ENCODE measurements at regions of chr19 and their contacts with region 1.

Region 1: DNA sequence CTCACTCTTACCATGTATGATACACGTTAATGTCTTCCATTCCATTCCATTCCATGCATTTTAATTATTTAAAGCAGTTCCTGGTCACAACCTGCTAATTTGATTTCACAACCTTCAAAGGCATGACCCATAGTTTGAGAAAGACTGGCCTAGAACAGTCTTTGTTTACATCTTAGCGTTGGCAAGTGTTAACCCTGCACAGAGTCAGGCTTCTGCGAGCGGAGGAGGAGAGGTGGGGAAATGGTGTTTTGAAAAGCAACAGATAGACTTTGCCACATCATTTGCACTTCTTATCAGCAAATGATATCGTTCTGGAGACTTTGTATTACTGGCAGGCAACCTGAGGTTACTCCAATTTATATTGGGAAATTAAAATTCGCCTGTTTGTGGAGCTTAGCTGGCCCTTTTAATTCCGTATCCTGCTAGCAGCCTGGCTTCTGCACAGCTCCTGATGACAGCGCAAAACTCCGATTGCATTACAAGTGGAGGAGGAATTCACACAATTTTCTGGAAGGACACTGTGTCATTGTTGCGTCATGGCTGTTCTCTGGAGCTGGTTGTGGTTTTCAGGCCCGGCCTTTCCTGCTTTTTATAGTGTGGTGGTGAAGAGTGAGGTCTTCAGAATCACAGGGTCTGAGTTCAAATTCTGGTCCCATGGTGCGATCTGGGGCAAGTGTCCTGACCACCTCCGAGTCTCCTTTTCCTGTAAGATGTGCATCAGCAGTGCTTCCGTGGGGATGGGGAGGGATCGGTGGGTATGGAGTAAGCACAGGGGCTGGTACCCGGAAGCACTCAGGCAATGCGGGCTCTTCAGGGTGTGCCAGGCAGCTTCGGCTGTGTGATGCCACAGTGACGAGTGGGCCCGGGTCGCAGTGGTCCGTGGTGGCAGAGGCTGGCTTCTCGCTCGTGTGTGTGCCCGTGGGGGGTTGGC is 49.1 kb upstream of the EHD2 start:
- DNase-seq: peak; percentile 73 to 95
- H3K4me3 ChIP-seq: peak overlapping the region in 1 of 2 donors; percentile 47
- H3K27ac ChIP-seq: peak overlapping the region; percentile 95 to 97
- H3K4me1 ChIP-seq: peaks cover 11 to 41% of the 10 kb centered on the region in 2 donors
- H3K27me3 ChIP-seq: no peaks in the 10 kb centered on the region
- CTCF ChIP-seq: no peak

Region 2: GRCh38 chr19:47391510-47392223 is 272.4 kb before region 1 on chr19:
- intact Hi-C with region 1: no loop called
- DNase-seq: peak in 1 of 2 donors; percentile 80
- H3K4me3 ChIP-seq: no peak overlapping the region
- H3K27ac ChIP-seq: no peak overlapping the region
- H3K4me1 ChIP-seq: no peaks in the 10 kb centered on the region
- H3K27me3 ChIP-seq: no peaks in the 10 kb centered on the region
- CTCF ChIP-seq: peak; percentile 64 to 85 (median 80)

Region 3: DNA sequence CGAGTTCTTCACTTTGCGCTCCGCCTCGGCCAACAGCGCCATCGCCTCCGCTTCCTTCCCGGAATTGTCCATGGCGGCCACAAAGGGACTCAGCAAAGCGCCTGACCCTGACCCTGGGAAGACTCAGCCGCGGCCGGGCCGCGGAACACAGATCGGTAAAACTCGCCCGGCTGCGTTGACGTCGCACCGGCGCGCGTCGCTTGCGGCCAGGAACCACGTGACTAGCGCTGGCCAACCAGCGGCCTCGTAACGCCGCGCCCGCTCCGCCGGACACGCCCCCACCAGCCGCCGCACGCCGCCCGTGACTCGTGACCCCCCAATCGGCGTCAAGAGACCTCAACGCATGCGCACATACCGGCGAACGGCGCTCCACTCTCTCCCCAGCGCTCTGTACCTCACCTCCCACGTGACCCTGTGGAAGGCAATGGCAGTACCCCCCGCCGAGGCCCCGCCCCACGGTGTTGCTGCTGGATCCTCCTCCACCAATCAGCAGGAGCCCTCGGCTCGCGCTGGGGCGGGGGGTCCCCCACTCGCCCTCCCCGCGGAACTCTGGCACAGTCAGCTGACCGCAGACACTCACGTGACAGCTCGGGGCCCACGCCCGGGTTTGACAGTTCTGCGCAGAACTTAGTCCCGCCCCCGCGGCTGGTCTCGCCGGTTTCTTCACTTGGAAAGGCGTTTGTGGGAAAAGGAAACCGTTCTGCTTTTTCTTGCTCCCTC is 149.1 kb before region 1 on chr19 and contains the start of gene NAPA:
- intact Hi-C with region 1: no loop called
- DNase-seq: peak; percentile 100
- H3K4me3 ChIP-seq: peak within 1 kb of the TSS; percentile 84 to 85
- H3K27ac ChIP-seq: peak within 1 kb of the TSS; percentile 92 to 96
- H3K4me1 ChIP-seq: peaks cover 21 to 38% of the 10 kb centered on the region in 2 donors
- H3K27me3 ChIP-seq: no peaks in the 10 kb centered on the region
- CTCF ChIP-seq: no peak
- total RNA-seq, gene NAPA: 102 TPM

Region 4: DNA sequence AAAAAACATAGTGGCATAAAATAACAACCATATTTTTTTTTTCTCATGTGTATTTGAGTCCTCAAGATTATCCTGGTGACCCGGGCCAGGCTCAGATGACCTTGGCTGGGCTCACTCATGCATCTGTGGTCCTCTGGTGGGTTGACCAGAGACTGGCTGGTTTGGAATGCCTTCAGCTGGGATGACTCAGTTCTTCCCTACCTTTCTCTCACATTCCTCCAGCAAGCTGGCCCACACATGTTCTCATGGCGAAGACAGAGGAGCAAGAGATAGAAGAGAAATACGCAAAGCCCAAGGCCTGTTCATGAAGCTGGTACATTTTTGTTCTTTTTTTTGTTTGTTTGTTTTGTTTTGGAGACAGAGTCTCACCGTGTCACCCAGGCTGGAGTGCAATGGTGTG is 76.8 kb before region 1 on chr19:
- intact Hi-C with region 1: no loop called
- DNase-seq: no peak
- H3K4me3 ChIP-seq: no peak overlapping the region
- H3K27ac ChIP-seq: no peak overlapping the region
- H3K4me1 ChIP-seq: no peaks in the 10 kb centered on the region
- H3K27me3 ChIP-seq: no peaks in the 10 kb centered on the region
- CTCF ChIP-seq: no peak

Region 5: DNA sequence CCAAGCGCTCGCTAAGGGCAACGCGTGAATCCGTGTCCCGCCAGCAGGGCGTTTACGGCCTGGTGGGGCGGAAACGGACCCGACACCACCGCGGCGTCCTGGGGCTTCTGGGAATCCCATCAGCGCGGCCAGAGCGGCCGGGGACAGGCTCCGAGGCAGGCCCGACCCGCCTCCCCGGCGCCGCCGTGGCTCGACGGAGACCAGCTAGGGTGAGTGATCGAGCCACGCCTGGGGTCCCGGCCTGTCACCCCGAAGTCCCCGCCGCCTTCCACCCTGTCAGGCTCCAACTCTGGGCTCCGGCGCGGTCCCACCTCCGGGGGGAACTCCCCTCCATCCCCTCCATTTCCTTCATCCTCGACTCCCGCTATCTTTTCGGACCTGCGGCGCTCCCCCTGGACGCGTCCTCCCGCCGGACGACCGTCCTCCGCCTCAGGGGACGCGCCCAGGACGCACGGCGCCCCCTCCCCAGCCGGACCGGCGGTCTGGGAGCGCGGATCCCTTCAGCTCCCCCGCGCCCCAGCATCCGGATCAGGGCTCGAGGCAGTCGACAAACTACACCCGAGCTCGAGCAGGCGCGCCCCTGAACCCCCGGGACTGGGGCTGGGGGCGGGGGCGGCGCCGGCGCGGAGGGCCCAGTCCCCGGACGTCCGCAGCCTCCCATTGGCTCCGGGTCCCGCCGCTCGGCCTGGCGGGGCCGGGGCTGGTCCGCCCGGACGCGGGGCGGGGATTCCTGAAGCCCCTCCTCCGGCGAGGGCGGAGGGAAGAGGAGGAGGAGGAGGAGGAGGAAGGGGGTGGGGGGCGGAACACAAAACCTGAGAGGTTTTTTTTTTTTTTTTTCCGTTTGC is 55.8 kb before region 1 on chr19:
- intact Hi-C with region 1: loop called (anchors 2 kb)
- DNase-seq: peak; percentile 65 to 96
- H3K4me3 ChIP-seq: peak overlapping the region; percentile 84 to 97
- H3K27ac ChIP-seq: peak overlapping the region; percentile 94 to 97
- H3K4me1 ChIP-seq: peaks cover 9 to 38% of the 10 kb centered on the region in 2 donors
- H3K27me3 ChIP-seq: no peaks in the 10 kb centered on the region
- CTCF ChIP-seq: peak; percentile 22 to 55 (median 25)

Region 6: DNA sequence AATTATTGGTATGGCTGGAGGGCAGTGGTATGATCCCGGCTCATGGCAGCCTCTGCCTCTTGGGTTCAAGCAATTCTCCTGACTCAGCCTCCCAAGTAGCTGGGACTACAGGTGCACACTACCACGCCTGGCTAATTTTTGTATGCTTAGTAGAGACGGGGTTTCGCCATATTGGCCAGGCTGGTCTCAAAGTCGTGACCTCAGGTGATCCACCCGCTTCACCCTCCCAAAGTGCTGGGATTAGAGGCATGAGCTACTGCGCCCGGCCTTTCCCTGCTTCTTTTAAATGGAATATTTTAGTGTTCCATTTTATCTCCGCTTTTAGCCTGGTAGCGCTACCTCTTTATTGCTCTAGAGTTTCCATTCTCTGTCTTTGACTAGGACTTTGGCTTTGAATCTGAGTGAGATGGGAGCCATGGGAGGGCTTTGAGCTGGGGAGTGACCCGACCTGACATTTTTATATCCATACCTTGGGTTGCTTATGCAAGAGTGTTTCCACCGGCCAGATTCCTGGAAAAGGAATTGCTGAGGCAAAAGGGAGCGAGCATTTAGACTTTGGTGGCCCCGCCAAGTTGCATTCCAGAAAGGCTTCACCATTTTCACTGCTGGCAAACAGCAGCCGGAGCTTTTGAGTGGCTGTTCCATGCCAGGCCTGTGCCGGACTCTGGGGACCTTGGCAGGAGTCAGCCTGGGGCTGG is 32.3 kb before region 1 on chr19:
- intact Hi-C with region 1: loop called (anchors 1 kb)
- DNase-seq: peak in 1 of 2 donors; percentile 73
- H3K4me3 ChIP-seq: no peak overlapping the region
- H3K27ac ChIP-seq: peak overlapping the region; percentile 52 to 54
- H3K4me1 ChIP-seq: peaks cover 0 to 13% of the 10 kb centered on the region in 2 donors
- H3K27me3 ChIP-seq: no peaks in the 10 kb centered on the region
- CTCF ChIP-seq: no peak

Region 7: DNA sequence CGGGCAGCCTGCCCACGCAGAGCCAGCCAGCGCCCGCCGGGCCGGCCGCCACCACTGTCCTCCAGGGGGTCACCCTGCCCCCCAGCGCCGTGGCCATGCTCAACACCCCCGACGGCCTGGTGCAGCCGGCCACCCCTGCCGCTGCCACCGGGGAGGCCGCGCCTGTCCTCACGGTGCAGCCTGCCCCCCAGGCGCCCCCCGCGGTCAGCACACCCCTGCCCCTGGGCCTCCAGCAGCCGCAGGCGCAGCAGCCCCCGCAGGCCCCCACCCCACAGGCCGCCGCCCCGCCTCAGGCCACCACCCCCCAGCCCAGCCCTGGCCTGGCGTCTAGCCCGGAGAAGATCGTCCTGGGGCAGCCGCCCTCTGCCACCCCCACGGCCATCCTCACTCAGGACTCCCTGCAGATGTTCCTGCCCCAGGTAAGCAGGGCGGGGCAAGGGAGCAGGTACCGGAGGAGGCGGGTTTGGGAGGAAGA is 16.8 kb after region 1 on chr19:
- intact Hi-C with region 1: no loop called
- DNase-seq: no peak
- H3K4me3 ChIP-seq: no peak overlapping the region
- H3K27ac ChIP-seq: no peak overlapping the region
- H3K4me1 ChIP-seq: no peaks in the 10 kb centered on the region
- H3K27me3 ChIP-seq: no peaks in the 10 kb centered on the region
- CTCF ChIP-seq: no peak

Measured in ascending aorta (tissue), 2 donors.